ENCODE measurements at regions of chr1 and their contacts with region 1.

Region 1: DNA sequence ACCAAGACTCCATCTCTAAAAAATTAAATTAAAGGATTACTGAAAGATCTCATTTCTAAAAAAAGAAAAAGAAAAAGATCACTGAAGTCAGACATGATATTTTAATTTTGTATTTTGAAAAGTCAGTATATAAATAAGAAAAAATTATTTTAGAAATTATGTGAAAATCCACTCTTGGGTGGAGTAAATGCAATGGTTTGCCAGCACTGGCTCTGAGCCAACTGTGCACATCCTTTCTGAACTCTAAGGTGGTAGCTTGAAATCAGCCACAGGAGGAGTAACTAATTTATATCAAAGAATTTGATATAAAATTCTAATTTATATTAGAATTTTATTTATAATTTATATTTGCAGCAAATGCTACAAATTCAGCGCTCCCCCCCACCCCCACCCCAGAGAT is 18.5 kb downstream of the ELK4 start:
- DNase-seq: no peak
- H3K4me3 ChIP-seq: no peak overlapping the region
- H3K27ac ChIP-seq: no peak overlapping the region
- H3K4me1 ChIP-seq: no peaks in the 10 kb centered on the region
- H3K27me3 ChIP-seq: no peaks in the 10 kb centered on the region
- CTCF ChIP-seq: no peak

Region 2: DNA sequence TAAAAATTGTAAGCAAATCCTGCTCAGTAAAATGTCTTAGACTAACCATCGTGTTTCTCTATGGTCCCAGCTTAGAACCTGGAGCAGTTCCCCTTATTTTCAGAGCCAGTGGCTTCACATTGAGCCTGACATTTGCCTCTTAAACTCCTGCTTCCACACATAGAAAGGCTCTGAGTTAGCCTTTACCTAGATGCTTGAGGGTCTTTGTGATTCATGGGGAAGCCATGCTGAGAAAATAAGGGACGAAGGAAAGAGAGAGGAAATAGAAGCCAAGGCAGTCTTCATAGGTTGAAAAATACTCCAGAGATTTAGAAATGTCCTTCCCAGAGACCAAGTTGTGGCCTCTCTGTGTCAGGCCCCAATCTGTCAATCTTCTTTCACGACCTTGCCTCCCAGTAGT is 475.4 kb before region 1 on chr1:
- CTCF ChIA-PET with region 1: no interaction called
- POLR2A ChIA-PET with region 1: no interaction called
- intact Hi-C with region 1: no loop called
- DNase-seq: no peak
- H3K4me3 ChIP-seq: no peak overlapping the region
- H3K27ac ChIP-seq: no peak overlapping the region
- H3K4me1 ChIP-seq: no peaks in the 10 kb centered on the region
- H3K27me3 ChIP-seq: no peaks in the 10 kb centered on the region
- CTCF ChIP-seq: no peak

Region 3: GRCh38 chr1:205229399-205229871 is 383.9 kb before region 1 on chr1:
- CTCF ChIA-PET with region 1: no interaction called
- POLR2A ChIA-PET with region 1: no interaction called
- intact Hi-C with region 1: no loop called
- DNase-seq: peak; percentile 42 to 50
- H3K4me3 ChIP-seq: peak overlapping the region; percentile 58; the same call in 1 of the 2 replicates
- H3K27ac ChIP-seq: no peak overlapping the region
- H3K4me1 ChIP-seq: 0 out of 2 replicates have a peak, but pooled peaks cover 8% of the 10 kb centered on the region
- H3K27me3 ChIP-seq: peaks cover 14% of the 10 kb centered on the region; the same call in 1 of the 2 replicates
- CTCF ChIP-seq: 0 out of 2 replicates have a peak, but pooled peaks have one; percentile 31

Region 4: DNA sequence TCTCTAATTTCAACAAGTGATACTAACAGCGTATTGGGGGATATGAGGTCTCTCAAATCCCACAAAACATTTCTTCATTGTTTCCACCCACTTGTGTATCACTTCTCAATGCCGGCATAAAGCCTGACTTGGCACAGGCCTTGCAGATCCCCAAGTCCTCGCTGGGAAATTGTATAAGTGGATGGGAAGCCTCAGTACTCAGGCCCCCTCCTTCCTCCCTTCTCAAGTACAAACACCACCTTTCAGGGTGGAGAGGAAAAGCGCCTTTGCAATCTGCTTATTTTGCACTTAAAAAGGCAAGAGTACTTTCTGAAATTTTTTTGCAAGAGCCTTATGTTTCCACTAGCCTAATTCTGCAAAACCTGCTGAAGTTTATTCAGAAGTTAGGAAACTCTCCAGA is 230.7 kb before region 1 on chr1:
- CTCF ChIA-PET with region 1: no interaction called
- POLR2A ChIA-PET with region 1: interaction called, 18 read pairs
- intact Hi-C with region 1: no loop called
- DNase-seq: no peak
- H3K4me3 ChIP-seq: no peak overlapping the region
- H3K27ac ChIP-seq: no peak overlapping the region
- H3K4me1 ChIP-seq: no peaks in the 10 kb centered on the region
- H3K27me3 ChIP-seq: no peaks in the 10 kb centered on the region
- CTCF ChIP-seq: no peak

Region 5: GRCh38 chr1:205832326-205832751 is 219.1 kb after region 1 on chr1:
- CTCF ChIA-PET with region 1: no interaction called
- POLR2A ChIA-PET with region 1: no interaction called
- intact Hi-C with region 1: no loop called
- DNase-seq: no peak
- H3K4me3 ChIP-seq: no peak overlapping the region
- H3K27ac ChIP-seq: no peak overlapping the region
- H3K4me1 ChIP-seq: no peaks in the 10 kb centered on the region
- H3K27me3 ChIP-seq: no peaks in the 10 kb centered on the region
- CTCF ChIP-seq: no peak

Measured in PC-9 (cell line).